Endothelial cell of umbilical vein (primary cell): ENCODE measurements at regions of chr18 and their contacts with region 1.

Region 1: DNA sequence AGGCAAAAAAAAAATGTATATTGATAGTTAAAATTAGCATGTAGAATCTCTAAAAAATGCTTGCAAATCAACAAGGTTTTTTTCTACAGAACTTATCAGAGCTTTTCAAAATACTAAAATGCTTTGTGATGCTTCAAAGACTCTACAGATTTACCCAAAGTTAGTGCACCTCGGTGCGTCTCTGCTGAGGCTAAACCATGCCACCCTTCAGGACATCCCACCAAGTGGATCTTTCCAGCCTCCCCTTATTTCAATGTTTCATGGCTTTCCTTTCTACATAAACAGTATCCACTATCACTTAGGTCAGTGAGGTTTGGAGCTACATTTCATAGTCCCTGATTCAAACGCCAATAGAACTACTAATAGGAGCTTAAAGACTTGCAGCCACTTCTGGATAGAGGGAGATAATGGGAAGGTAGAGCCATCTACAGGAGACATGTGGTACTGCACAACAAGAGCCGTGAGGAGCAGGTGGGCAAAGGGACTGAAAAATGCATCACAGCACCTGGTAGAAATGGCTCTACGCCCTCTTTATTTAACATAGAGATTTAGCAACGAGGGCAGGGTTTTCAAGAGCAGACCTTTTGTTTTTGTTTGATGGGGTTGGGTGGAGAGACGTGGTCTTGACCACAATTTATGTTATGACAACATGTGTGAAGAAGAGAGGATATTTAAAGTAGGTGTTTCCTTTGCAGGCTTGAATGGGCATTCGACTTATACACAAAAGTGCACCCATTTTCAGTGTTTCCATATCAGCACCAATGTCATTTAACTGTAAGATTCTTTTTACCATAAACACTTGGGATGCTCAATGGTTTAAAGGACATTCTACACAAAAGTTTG is 56.1 kb upstream of the SLC35G4 start:
- DNase-seq: peak; percentile 59
- H3K4me3 ChIP-seq: no peak overlapping the region
- H3K27ac ChIP-seq: no peak overlapping the region
- H3K4me1 ChIP-seq: no peaks in the 10 kb centered on the region
- H3K27me3 ChIP-seq: no peaks in the 10 kb centered on the region
- CTCF ChIP-seq: peak; percentile 76 to 86
- POLR2A ChIP-seq: no peak

Region 2: DNA sequence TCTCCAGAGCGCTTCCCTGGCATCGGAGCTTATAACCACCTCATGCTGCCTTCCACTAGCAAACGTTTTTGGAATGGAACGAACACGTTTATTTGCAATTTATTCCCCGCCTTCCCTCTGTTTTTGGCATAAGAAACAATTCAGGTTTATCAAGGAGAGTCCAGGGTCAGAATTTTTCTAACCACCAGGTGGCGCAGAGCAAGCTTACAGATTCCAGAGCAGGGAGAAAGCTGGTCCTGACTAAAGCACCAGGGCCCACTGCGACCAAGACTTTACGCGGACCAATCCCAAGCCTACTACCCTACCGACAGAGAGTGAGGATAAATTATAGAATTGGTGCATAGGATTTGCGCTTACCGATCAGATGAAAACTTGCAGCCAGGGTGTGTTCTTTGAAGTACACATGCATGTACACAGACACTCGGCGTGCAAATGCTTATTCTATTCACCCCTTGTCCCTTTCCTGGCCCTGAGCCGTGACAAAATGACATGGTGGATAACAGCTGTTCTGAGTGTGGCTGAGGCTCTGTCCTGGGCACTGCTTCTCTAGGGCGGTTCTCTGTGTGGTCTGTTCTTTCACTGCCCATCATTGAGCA is 992.8 kb before region 1 on chr18:
- CTCF ChIA-PET with region 1: interaction called, 50 read pairs
- POLR2A ChIA-PET with region 1: no interaction called
- dilution Hi-C with region 1: no loop called
- intact Hi-C with region 1: loop called (anchors 1 kb)
- DNase-seq: peak; percentile 69
- H3K4me3 ChIP-seq: no peak overlapping the region
- H3K27ac ChIP-seq: no peak overlapping the region
- H3K4me1 ChIP-seq: peaks cover 2% of the 10 kb centered on the region
- H3K27me3 ChIP-seq: no peaks in the 10 kb centered on the region
- CTCF ChIP-seq: peak; percentile 70 to 79
- POLR2A ChIP-seq: no peak

Region 3: DNA sequence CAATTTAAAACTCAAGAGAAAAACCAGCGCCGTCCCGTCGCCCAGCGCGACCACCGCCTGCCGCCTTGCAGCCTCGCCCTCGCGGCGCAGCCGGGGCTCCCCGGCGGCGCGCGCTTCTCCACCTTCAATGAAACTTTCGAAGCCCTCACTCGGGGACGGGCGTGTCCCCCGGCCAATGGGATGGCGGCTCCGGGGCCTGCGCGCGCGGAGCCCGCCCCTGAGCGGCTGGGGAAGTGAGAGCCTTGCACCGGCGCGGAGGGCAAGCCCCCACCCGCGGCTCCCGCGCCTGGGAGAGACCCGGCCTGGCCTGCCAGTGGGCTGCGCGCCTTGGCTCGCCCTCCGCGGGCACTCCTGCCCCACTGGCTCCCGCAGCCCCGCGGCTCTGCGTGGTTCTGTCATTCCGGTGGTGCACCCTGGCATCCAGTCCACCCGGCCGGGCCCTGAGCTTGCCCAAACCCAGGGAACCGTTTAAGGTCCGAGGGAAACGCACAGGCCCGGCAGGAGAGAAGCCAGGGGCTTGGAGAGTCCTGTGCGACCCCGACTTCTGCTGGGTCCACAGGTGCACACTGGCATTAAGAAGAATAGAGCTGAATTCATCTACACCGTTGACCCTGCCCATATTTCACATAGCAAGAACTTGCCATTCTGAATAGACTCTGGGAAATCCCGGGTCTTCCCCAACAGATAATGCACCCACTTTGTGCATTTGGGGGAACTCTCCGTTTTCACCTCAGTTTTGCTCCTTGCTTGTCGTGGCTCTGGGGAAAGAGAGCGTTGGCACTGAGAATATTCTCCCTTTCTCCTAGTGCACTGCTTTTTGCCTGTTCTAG is 403.7 kb before region 1 on chr18 and contains the start of gene PIEZO2:
- CTCF ChIA-PET with region 1: interaction called, 11 read pairs
- POLR2A ChIA-PET with region 1: no interaction called
- dilution Hi-C with region 1: no loop called
- intact Hi-C with region 1: no loop called
- DNase-seq: peak; percentile 29
- H3K4me3 ChIP-seq: peak within 1 kb of the TSS in 2 of 3 experiments; percentile 21 to 25
- H3K27ac ChIP-seq: no peak within 1 kb of the TSS
- H3K4me1 ChIP-seq: no peaks in the 10 kb centered on the region
- H3K27me3 ChIP-seq: peaks cover 44 to 47% of the 10 kb centered on the region in 2 experiments
- CTCF ChIP-seq: no peak
- POLR2A ChIP-seq: no peak
- total RNA-seq, gene PIEZO2: 5.0 and 11.2 TPM in 2 replicates

Region 4: DNA sequence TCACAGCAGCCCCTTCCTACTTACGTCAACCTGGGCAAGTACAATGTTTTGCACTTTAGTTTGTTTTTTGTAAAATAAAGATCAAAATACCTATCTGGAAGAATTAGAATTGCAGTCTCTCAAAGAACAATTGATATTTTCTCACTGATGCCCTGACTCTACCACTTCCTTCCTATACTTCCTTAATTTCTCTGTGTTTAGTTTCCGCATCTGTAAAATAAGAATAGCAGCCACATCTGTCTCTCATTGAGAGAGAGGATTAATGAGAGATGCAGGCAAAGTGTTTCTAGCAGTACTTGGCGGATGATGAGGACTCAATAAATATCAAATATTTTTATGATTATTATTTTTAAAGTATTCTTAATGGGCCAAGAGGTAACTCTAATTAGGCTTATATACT is 281.4 kb before region 1 on chr18:
- CTCF ChIA-PET with region 1: no interaction called
- POLR2A ChIA-PET with region 1: no interaction called
- dilution Hi-C with region 1: no loop called
- intact Hi-C with region 1: no loop called
- DNase-seq: no peak
- H3K4me3 ChIP-seq: no peak overlapping the region
- H3K27ac ChIP-seq: no peak overlapping the region
- H3K4me1 ChIP-seq: no peaks in the 10 kb centered on the region
- H3K27me3 ChIP-seq: peaks cover 0 to 4% of the 10 kb centered on the region in 2 experiments
- CTCF ChIP-seq: no peak
- POLR2A ChIP-seq: no peak

Region 5: DNA sequence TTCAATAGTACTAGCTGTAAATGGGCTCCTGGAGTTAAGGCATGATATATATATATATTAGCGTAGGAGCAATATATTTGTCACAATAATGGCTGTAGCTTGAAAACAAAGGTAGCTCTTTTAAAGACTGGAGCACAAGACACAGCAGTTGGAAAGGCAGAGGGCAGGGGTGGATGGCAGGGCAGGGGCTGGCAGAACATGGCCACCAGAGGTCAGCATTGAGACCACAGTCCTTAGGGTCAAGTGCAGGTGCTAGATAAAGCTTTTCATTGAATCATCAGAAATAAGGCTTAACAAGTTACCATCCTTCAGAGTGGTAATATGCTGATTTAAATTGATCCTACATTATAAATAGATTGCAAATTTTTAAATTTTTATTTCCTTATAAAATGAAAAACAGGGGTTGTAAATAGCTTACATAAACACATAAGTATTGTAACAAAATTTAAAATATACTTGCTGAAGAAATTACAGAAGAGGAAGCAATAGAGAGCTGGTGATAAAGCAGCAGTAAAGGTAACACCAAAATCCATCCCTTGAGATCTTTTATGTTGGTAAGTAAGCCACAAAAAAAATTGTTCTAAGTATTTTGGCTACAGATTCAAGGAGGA is 242.7 kb before region 1 on chr18:
- CTCF ChIA-PET with region 1: interaction called, 274 read pairs
- POLR2A ChIA-PET with region 1: no interaction called
- dilution Hi-C with region 1: no loop called
- intact Hi-C with region 1: loop called (anchors 1 kb)
- DNase-seq: peak; percentile 16
- H3K4me3 ChIP-seq: no peak overlapping the region
- H3K27ac ChIP-seq: no peak overlapping the region
- H3K4me1 ChIP-seq: no peaks in the 10 kb centered on the region
- H3K27me3 ChIP-seq: no peaks in the 10 kb centered on the region
- CTCF ChIP-seq: peak; percentile 63 to 73
- POLR2A ChIP-seq: no peak

Region 6: DNA sequence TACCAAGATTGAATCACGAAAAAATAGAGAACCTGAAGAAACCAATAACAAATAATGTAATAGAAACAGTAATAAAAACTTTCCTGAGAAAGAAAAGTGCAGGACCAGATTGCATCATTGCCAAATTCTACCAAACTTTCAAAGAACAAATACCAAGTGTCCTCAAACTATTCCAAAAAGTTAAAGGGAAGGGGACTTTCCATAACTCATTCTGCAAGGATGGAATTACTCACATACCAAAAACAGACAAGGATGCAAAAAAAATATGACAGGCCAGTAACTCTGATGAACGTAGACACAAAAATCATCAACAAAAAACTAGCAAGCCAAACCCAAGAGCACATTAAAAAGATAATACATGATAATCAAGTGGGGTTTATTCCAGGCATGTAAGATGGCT is 116.3 kb before region 1 on chr18:
- CTCF ChIA-PET with region 1: no interaction called
- POLR2A ChIA-PET with region 1: no interaction called
- dilution Hi-C with region 1: no loop called
- intact Hi-C with region 1: no loop called
- DNase-seq: no peak
- H3K4me3 ChIP-seq: no peak overlapping the region
- H3K27ac ChIP-seq: no peak overlapping the region
- H3K4me1 ChIP-seq: no peaks in the 10 kb centered on the region
- H3K27me3 ChIP-seq: no peaks in the 10 kb centered on the region
- CTCF ChIP-seq: no peak
- POLR2A ChIP-seq: no peak

Region 7: DNA sequence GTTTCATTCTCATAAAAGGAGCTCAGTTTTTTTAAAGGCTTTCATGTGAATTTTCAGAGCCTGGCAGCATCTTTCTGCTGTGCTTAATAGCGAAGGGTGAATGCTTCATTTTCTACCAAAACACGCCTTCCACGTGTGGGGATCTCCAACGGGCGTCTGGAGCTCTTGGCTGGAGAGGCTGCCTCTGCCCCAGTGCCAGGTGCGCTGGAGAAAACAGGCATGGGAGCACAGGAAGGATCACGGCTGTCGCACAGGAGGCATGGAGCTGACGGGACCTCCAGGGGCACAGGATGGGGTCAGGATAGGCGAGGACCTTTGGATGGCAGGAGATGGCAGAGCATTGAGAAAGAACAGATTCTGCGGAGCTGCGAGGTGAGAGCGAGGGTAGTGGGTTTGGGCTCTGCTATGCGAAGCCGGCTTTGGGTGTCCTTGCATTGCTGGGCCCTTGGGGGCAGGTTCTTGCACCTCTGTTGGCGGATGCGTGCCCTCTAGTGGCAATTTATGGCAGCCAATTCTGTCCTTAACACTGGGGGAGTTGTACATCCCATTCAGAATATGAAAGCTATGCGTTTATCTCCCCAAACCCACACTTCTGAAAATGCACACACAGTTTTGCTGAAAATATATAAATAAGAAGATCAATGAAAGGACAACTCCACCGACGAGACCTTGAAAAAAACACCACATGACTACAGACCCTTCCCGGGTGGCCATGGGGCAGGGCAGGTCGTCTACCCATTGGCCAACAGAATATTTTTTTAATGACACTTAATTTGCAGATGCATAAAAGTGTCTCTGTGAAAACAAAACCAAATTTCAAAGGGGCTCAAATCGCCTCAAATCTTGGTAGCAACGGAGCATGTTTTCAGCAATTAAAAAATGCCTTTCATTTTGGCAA is 34.3 kb before region 1 on chr18:
- CTCF ChIA-PET with region 1: interaction called, 41 read pairs
- POLR2A ChIA-PET with region 1: no interaction called
- dilution Hi-C with region 1: no loop called
- intact Hi-C with region 1: loop called (anchors 2 kb)
- DNase-seq: peak; percentile 39
- H3K4me3 ChIP-seq: no peak overlapping the region
- H3K27ac ChIP-seq: no peak overlapping the region
- H3K4me1 ChIP-seq: peaks cover 17% of the 10 kb centered on the region
- H3K27me3 ChIP-seq: no peaks in the 10 kb centered on the region
- CTCF ChIP-seq: peak; percentile 72 to 81
- POLR2A ChIP-seq: no peak

Region 8: GRCh38 chr18:11570769-11571168 is 17.4 kb after region 1 on chr18:
- CTCF ChIA-PET with region 1: interaction called, 14 read pairs
- POLR2A ChIA-PET with region 1: no interaction called
- dilution Hi-C with region 1: no loop called
- intact Hi-C with region 1: no loop called
- DNase-seq: no peak
- H3K4me3 ChIP-seq: no peak overlapping the region
- H3K27ac ChIP-seq: no peak overlapping the region
- H3K4me1 ChIP-seq: no peaks in the 10 kb centered on the region
- H3K27me3 ChIP-seq: peaks cover 0 to 2% of the 10 kb centered on the region in 2 experiments
- CTCF ChIP-seq: no peak
- POLR2A ChIP-seq: no peak